Activated CD4-positive, alpha-beta T cell treated with anti-CD3 and anti-CD28 coated beads for 36 hours (primary cell): ENCODE measurements at regions of chr11 and their contacts with region 1.

Region 1: GRCh38 chr11:1694064-1694845 is 2.7 kb upstream of the KRTAP5-6 start:
- DNase-seq: peak; percentile 91
- ATAC-seq: peak; percentile 91
- H3K4me3 Mint-ChIP-seq: no peak overlapping the region
- H3K27ac Mint-ChIP-seq: no peak overlapping the region
- H3K4me1 Mint-ChIP-seq: peaks cover 5% of the 10 kb centered on the region
- H3K27me3 Mint-ChIP-seq: peaks cover 14% of the 10 kb centered on the region

Region 2: GRCh38 chr11:1679881-1680280 is 14.4 kb before region 1 on chr11:
- CTCF ChIA-PET with region 1: interaction called, 10 read pairs
- POLR2A ChIA-PET with region 1: no interaction called
- intact Hi-C with region 1: no loop called
- DNase-seq: no peak
- ATAC-seq: no peak
- H3K4me3 Mint-ChIP-seq: no peak overlapping the region
- H3K27ac Mint-ChIP-seq: no peak overlapping the region
- H3K4me1 Mint-ChIP-seq: no peaks in the 10 kb centered on the region
- H3K27me3 Mint-ChIP-seq: peaks cover 24% of the 10 kb centered on the region

Region 3: DNA sequence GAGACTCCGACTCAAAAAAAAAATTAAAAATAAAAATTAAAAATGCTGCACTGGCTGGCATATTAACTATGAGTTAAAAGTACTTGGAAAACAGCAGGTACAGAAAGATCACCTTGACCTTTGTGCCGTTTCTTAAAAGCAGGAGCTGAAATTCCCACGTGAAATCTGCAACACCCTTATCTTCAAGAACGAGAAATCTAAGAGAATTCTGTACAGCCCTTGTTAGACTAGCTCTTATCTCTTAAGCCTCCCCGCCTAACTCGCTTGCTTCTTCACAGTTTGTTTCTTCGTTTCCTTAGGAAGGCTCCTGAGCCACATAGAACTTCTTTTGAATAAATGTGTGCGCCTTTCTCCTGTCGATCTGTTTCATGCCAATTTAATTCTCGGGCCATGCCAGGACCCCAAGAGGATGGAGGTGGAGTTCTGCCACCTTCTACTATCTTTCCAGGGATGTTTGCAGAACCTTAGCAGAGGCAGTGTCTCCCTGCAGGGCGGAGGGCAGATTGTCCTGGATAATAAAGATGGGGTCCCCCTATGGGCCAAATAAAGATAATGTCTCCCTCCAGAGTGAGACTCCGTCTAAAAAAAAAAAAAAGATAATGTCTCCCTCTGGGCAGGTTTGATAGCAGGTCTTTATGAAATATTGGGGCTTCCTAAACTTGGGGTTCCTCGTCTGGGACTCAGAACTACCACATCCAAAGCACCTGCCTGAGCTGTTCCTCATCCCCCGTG is 113.2 kb after region 1 on chr11:
- CTCF ChIA-PET with region 1: interaction called, 19 read pairs
- POLR2A ChIA-PET with region 1: no interaction called
- intact Hi-C with region 1: no loop called
- DNase-seq: no peak
- ATAC-seq: no peak
- H3K4me3 Mint-ChIP-seq: no peak overlapping the region
- H3K27ac Mint-ChIP-seq: no peak overlapping the region
- H3K4me1 Mint-ChIP-seq: no peaks in the 10 kb centered on the region
- H3K27me3 Mint-ChIP-seq: peaks cover 4% of the 10 kb centered on the region

Region 4: DNA sequence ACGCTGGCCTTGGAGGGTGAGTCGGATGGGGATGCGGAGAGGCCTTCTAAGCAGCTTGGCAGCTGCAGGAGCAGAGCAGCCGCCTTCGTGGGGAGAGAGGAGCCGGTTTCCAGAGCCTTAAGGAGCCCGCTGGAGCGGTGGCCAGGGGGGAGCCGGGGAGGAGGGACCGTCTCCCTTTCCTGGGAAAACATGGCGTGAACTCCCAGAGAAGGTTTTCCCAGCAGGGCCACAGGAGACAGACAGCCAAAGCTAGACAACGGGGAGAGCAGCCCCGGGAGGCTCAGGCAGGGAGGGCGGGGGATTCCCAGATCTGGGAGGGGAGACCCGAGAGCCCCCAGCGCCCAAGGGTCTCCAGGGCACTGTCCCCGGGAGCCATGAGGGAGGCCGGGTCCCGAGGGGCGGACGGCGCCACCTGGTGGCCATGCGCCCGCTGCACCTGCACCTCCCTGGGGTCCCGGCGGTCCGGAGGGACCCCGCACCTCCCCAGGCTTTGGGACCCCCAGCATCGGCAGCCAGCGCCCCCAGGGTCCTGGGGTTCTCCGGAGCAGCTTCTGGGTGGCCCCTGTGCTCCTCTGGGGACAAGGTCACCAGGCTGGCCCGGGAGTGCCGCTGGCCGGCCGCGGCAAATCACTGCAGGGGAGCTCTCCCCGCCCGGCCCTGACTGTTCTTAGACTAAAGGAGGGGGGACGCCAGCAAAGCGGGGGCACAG is 138.1 kb after region 1 on chr11:
- CTCF ChIA-PET with region 1: interaction called, 181 read pairs
- POLR2A ChIA-PET with region 1: interaction called, 3 read pairs
- intact Hi-C with region 1: loop called (anchors 1 kb)
- DNase-seq: peak; percentile 81
- ATAC-seq: peak; percentile 75
- H3K4me3 Mint-ChIP-seq: no peak overlapping the region
- H3K27ac Mint-ChIP-seq: no peak overlapping the region
- H3K4me1 Mint-ChIP-seq: no peaks in the 10 kb centered on the region
- H3K27me3 Mint-ChIP-seq: no peaks in the 10 kb centered on the region

Region 5: DNA sequence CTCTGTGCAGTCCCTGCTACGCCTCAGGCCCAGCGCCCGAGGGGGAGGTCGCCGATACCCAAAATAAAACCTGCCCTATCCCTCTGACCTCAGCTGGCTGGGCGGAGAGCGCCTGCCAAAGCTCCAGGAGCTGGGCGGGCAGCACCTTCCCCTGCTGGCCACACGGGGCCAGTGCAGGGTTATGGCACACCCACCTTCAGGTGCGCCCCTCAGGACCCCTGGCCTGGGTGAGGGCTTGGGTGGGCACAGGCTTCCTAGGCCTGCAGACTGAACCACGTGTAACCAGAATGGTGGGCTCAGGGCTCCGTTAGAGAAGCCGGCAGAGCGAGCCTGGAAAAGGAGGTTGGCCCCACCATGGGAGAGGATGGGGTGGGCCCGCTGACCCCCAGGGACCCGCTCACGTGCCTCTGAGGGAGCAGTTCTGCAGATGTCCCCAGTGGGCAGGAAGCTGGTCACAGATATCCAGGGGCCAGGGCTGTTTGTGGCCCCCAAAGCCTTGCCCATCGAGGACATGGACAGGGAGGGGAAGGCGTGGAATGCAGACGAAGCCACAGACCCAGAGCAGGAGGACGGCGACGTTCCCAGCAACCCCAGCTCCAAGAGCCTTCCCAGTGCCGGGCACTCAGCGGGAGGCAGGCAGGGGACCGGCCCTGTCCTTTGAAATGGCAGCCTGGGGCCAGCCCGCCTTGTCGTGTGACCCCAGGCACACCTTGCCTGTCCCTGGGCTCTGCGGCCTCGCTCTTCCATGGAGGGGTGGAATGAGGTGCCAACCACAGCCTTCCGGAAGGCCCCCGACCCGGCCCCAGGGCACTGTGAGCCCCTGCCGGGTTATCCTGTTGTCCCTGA is 223.6 kb after region 1 on chr11:
- CTCF ChIA-PET with region 1: interaction called, 5 read pairs
- POLR2A ChIA-PET with region 1: no interaction called
- intact Hi-C with region 1: loop called in 1 of 2 experiments (anchors 5 kb)
- DNase-seq: no peak
- ATAC-seq: peak; percentile 33
- H3K4me3 Mint-ChIP-seq: no peak overlapping the region
- H3K27ac Mint-ChIP-seq: no peak overlapping the region
- H3K4me1 Mint-ChIP-seq: peaks cover 7% of the 10 kb centered on the region
- H3K27me3 Mint-ChIP-seq: peaks cover 12% of the 10 kb centered on the region

Region 6: DNA sequence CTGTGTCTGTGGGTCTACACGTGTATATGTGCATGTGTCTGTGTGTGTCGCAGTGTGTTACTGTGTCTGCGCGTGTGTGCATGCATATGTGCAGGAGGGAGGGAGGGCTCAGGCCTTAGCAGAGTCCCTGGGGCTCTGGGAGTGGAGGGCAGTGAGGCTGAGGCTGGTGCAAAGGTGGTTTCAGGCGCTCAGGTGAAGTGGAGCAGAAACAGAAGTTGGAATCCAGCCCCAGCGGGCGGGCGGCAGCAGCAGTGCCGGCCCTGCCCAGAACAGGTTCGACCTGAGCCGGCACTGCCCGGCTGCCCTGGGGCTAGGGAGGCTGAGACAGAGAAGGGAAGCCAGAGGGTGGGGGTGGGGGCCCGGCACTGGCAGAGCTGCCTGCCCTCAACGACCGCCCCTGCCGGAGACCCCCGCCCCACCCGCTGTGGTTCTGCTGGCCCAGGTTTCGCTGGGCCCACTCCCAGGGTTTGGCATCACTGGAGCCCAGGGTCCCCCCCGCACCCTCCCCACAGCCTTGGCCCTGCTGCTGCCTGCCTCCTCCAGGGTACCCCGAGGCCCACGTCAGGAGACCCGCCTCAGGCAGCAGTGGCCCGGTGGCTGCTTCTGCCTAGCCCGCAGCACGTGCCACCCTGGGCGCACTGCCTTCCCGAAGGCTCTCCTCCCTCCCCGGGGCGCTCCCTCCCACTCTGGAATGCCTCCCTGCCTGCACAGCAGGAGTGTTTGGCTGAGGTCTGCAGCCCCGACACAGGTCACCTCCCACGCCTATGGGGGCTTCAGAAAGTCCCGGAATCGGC is 562.9 kb after region 1 on chr11:
- CTCF ChIA-PET with region 1: no interaction called
- POLR2A ChIA-PET with region 1: no interaction called
- intact Hi-C with region 1: no loop called
- DNase-seq: no peak
- ATAC-seq: no peak
- H3K4me3 Mint-ChIP-seq: no peak overlapping the region
- H3K27ac Mint-ChIP-seq: no peak overlapping the region
- H3K4me1 Mint-ChIP-seq: no peaks in the 10 kb centered on the region
- H3K27me3 Mint-ChIP-seq: no peaks in the 10 kb centered on the region